GM10248 (cell line): ENCODE measurements at regions of chr7 and their contacts with region 1.

Region 1: GRCh38 chr7:155344600-155345433 is 47.1 kb downstream of the INSIG1 start:
- DNase-seq: peak; percentile 89
- CTCF ChIP-seq: peak; percentile 77

Region 2: GRCh38 chr7:154913638-154914312 is 431.0 kb before region 1 on chr7:
- CTCF ChIA-PET with region 1: interaction called, 27 read pairs
- POLR2A ChIA-PET with region 1: no interaction called
- DNase-seq: peak; percentile 87
- CTCF ChIP-seq: peak; percentile 97

Region 3: GRCh38 chr7:155003376-155004214 is 341.2 kb before region 1 on chr7:
- CTCF ChIA-PET with region 1: interaction called, 12 read pairs
- POLR2A ChIA-PET with region 1: no interaction called
- DNase-seq: peak; percentile 97
- CTCF ChIP-seq: no peak

Region 4: DNA sequence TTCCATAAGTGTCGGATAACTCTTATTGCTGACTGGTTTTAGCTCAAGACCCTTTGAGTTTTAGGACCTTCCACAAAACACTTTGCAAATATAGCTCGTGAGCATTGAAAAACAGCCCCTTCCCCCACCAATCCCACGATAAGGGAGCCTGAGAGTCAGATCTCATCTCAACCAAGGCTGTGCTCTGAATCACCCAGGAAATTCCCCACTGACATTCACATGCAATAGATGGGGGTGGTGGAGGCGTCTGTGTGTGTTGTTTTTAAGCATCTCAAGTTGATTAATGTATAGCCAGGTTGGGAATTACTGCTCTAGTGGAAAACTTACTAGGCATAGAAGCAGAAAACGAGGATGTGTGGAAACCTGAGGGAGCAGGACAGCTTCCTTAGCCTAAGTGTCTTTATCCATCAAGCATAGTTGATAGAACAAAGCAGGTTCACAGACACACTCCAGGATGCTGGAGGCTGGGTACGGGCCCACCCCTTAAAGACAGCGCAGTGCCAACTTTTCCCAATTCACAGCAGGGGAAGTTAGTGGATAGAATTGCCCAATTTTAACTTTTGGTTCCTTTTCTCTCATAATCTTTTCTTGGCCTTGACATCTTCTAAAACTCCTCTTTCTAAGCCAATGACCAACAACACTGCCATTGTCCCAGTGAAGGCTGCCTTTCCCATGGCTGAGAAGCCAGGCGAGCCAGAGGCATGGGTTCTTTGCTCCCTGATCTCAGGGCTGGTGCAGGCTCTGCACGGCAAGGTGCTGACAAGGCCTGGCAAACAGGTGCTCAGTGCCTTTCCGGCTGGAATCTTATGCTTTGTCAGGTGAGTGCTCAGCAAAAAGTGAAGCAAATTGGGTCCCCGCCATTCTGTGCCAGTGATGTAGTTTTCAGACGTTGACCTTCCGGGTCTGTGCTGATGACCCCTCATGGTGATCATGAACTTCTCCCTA is 145.6 kb before region 1 on chr7:
- CTCF ChIA-PET with region 1: interaction called, 11 read pairs
- POLR2A ChIA-PET with region 1: no interaction called
- DNase-seq: peak; percentile 51
- CTCF ChIP-seq: no peak

Region 5: DNA sequence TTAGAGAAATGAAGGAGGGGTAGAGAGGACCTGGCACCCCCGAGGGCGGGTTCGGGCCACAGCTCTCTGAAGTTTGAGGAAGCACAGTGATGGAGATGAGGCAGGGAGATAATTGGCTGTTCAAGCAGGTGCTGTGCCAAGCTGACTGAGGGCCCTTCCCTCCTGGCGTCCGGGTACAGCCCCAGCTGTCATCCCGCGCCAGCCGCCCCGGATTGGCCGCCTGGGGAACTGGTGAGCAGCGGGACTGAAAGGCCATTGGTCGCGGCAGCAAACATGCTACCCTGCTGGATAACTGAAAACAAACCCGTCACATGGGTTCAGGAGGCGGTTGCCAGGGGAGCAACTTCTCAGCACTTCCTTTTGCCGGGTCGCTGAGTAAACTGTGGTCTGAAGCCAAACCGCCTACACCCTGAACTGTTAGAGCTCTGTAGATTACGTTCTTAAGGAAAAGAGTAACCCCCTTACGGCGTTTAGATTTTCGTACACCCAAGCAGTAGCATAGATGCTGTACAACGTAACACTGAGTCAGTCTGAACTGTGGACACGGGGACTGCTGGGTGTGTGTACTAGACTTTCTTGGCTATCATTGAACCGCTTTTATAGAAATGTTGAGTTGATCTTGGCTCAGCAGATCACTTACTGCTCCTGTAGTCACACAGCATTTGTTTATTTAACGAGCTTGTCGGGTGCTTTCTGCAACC is 45.8 kb before region 1 on chr7:
- CTCF ChIA-PET with region 1: interaction called, 38 read pairs
- POLR2A ChIA-PET with region 1: no interaction called
- DNase-seq: peak; percentile 93
- CTCF ChIP-seq: no peak

Region 6: DNA sequence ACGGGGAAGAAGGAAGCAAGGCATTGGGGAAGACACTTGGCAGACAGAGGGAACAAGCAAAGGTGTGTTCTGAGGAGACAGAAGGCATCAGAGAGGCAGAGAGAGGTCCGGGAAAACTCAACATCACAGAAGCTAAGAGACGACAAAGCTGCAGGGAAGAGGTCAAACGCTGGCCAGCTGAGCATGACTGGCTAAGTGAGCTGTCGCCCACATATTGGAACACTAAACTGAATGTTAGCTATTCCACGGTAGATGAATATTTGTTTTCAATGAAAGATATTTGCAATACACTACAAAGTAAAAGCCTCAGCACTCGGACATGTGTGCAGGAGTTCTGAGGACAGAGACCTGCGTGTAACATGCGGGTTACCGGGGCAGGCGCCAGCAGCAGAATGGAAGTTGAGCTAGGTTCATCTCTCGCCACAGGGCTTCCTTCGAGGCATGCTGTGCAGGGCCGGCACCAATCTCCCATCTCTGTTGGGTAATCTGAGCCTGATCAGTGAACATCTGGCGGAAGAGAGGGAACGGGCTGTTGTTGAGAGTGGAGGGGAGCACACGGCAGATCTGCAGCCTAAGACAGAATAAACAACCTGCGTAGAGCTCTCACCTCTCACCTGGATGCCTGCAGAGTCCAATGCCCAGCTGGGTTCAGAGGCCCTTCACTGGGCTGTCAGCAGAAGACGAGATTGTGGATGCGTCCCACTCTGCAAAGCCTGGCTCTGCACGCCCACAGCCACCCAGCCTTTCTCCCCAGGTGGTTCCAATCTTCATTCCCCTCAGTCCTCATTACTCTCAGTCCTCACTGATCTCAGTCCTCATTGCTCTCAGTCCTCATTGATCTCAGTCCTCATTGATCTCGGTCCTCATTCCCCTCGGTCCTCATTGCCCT is 11.2 kb before region 1 on chr7:
- CTCF ChIA-PET with region 1: interaction called, 11 read pairs
- POLR2A ChIA-PET with region 1: no interaction called
- DNase-seq: no peak
- CTCF ChIP-seq: no peak

Region 7: GRCh38 chr7:155363852-155364562 is 19.2 kb after region 1 on chr7:
- CTCF ChIA-PET with region 1: interaction called, 10 read pairs
- POLR2A ChIA-PET with region 1: no interaction called
- DNase-seq: no peak
- CTCF ChIP-seq: peak; percentile 14